ENCODE measurements at regions of chr1 and their contacts with region 1.

Region 1: DNA sequence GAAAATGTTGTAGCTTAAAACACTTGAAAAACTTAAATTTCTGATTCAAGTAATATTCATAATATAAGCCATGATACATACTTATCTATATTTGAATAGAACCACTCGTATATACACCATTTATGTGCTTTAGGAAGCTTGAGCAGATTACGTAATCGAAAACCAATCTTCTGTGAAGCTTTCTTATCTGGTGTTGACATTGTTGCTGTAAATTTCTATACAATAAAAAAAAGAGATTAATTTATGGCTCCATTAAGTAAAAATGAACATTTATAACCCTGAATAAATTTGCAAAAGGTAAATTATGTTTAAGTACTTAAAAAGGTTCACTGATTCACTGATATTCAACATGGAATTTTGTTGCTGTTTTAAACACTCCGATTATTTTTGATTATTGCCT is 21.4 kb downstream of the LIN9 start:
- DNase-seq: no peak
- ATAC-seq: no peak
- H3K4me3 ChIP-seq: no peak overlapping the region
- H3K27ac ChIP-seq: no peak overlapping the region
- H3K4me1 ChIP-seq: no peaks in the 10 kb centered on the region
- H3K27me3 ChIP-seq: no peaks in the 10 kb centered on the region
- CTCF ChIP-seq: no peak
- POLR2A ChIP-seq: no peak
- RAD21 ChIP-seq: no peak

Region 2: DNA sequence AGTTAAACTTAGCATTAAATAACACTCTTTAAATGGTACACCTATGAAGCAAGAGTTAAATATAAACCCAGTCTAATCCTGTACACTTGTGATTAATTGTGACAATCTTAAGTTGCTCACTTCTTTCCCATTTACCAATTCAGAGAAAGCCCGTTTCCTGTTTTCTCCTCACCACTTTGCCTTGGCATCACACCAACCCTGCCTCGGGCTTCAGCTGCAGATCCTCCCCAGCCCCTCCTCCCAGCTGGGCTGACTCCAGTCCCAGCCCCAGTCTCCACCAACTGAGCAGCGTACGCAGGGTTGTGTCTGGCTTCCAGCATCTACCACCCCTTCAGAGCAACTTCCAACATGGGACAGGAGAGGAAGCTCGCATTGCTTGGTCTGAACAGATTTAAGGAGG is 367.7 kb before region 1 on chr1:
- CTCF ChIA-PET with region 1: no interaction called
- POLR2A ChIA-PET with region 1: no interaction called
- RAD21 ChIA-PET with region 1: no interaction called
- intact Hi-C with region 1: no loop called
- DNase-seq: no peak
- ATAC-seq: no peak
- H3K4me3 ChIP-seq: no peak overlapping the region
- H3K27ac ChIP-seq: no peak overlapping the region
- H3K4me1 ChIP-seq: peaks cover 6 to 15% of the 10 kb centered on the region in 2 experiments
- H3K27me3 ChIP-seq: no peaks in the 10 kb centered on the region
- CTCF ChIP-seq: no peak
- POLR2A ChIP-seq: no peak
- RAD21 ChIP-seq: no peak

Region 3: DNA sequence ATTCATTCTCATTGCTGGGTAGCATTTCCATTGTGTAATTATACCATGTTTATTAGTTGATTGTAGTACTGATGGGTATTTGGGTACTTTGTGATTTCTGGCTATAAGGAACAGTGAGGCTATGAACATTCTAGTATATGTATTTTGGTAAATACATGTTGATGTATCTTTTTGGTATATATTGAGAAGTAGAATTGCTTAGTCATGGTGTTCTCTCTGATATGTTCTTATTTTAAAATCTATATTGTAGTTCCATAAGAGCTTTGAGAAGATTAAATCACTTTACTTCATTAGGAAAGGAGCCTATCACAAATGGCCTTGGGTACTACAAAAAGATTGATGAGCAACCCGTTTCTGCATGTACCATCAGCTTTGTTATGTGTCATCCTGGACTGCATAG is 50.8 kb before region 1 on chr1:
- CTCF ChIA-PET with region 1: no interaction called
- POLR2A ChIA-PET with region 1: no interaction called
- RAD21 ChIA-PET with region 1: no interaction called
- intact Hi-C with region 1: loop called (anchors 5 kb)
- DNase-seq: no peak
- ATAC-seq: no peak
- H3K4me3 ChIP-seq: no peak overlapping the region
- H3K27ac ChIP-seq: no peak overlapping the region
- H3K4me1 ChIP-seq: no peaks in the 10 kb centered on the region
- H3K27me3 ChIP-seq: no peaks in the 10 kb centered on the region
- CTCF ChIP-seq: no peak
- POLR2A ChIP-seq: no peak
- RAD21 ChIP-seq: no peak

Measured in HCT116 (cell line).